Activated naive CD4-positive, alpha-beta T cell treated with anti-CD3 and anti-CD28 coated beads for 36 hours (primary cell): ENCODE measurements at regions of chr11 and their contacts with region 1.

Region 1: DNA sequence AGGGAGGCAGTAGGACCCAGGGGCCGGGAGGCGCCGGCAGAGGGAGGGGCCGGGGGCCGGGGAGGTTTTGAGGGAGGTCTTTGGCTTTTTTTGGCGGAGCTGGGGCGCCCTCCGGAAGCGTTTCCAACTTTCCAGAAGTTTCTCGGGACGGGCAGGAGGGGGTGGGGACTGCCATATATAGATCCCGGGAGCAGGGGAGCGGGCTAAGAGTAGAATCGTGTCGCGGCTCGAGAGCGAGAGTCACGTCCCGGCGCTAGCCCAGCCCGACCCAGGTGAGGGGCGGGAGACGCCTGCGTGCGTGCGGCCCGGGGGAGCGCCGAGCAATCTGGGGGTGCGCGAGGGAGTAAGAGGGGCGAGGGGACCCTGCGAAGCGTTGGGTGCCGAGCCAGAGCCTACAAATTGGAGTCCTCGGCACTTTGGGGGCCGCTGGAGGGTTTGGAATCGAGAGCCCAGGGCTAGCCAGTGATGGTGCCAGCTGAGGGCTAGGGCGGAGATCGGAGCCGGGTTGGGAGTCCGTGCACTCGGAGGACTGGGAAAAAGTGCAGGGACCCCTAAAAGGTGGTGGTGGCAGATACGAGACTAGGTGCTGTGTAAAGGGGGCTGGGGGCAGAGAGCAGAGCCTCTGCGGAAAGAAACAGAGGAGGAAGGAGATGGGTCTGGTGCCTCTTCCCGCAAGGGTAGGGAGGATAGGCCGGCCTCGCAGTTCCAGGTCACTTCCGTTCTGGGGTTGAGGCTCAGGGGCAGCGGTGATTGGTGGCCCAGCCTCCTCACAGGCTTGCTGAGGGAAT is at the start of gene SERPINH1:
- DNase-seq: peak; percentile 90
- H3K4me3 Mint-ChIP-seq: peak within 1 kb of the TSS; percentile 94
- H3K27ac Mint-ChIP-seq: peak within 1 kb of the TSS; percentile 97
- H3K4me1 Mint-ChIP-seq: peaks cover 27% of the 10 kb centered on the region
- H3K27me3 Mint-ChIP-seq: no peaks in the 10 kb centered on the region
- total RNA-seq, gene SERPINH1: 13.9 to 15.4 TPM

Region 2: DNA sequence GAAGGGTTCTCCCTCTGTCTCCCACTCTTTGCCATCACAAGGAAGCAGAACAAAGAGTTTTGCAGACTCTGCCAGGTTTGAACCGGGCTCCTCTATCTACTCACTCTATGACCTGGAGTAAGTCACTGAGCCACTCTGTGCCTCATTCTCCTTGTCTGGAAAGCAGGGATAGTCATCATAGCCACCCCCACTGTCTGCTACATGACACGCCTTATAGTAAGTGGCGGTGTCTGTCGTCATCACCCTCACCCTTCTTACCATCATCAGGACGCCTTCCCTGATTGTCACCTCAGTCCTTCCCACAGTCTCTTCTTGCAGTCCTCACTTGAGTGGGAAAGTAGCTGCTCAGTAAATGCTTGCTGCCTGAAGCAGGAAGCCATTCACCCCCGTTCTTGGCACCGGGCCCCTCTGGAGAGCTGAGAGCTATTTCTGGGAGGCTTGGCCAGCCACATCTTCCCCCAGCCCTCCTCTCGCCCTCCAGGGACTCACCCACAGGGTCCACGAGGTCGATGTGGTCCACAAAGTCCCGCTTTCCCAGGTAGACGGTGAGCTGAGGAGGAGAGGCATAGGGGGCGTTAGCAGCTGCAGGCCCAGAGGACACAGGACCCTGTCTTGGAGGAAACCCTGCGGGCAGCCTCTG is 275.3 kb before region 1 on chr11:
- CTCF ChIA-PET with region 1: no interaction called
- intact Hi-C with region 1: no loop called
- DNase-seq: no peak
- H3K4me3 Mint-ChIP-seq: no peak overlapping the region
- H3K27ac Mint-ChIP-seq: no peak overlapping the region
- H3K4me1 Mint-ChIP-seq: peaks cover 7% of the 10 kb centered on the region
- H3K27me3 Mint-ChIP-seq: no peaks in the 10 kb centered on the region

Region 3: GRCh38 chr11:75577207-75577606 is 15.0 kb after region 1 on chr11:
- CTCF ChIA-PET with region 1: interaction called, 10 read pairs
- intact Hi-C with region 1: loop called (anchors 1 kb)
- DNase-seq: peak; percentile 72
- H3K4me3 Mint-ChIP-seq: no peak overlapping the region
- H3K27ac Mint-ChIP-seq: no peak overlapping the region
- H3K4me1 Mint-ChIP-seq: peaks cover 9% of the 10 kb centered on the region
- H3K27me3 Mint-ChIP-seq: peaks cover 2% of the 10 kb centered on the region

Region 4: DNA sequence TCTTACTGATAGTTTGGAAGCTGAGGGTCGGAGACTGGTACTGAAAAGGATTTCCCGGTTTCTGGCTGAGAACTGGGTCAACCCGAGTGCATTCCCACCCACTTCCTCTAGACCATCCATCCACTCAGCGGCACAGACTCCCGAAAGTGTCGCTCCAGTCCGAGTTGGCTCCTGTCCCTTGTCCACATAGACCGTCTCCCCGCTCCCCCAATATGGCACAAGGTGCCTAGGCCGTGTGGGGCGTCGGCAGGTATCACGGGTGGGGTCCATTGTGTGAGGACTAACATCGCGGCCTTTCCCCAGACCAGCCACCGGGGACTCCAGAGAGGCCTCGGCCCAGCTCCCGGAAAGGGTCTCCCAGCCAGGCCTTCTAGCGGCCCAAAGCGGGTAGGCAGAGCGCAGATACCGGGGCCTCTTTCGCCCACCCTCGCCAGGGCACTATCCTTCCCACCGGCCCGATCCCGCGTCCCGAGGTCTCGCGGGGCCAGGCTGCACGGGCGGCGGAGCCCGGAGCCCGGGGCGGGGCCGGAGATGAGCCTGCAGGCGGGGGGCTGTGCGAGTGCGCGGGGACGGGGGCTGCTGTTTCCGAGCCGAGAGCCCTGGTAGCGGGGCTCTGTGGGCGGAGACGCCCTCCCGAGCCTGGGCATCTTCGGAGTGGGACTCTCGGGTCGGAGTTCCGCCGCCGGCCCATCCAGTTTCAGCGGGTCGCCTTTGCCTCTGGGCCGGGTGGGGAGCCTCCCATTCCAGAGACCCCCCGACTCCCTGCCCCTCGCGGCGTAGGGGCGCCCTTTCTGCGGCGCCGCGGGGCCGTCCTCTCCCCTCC is 20.9 kb after region 1 on chr11:
- CTCF ChIA-PET with region 1: interaction called, 10 read pairs
- intact Hi-C with region 1: loop called (anchors 1 kb)
- DNase-seq: peak; percentile 68
- H3K4me3 Mint-ChIP-seq: peak overlapping the region; percentile 72
- H3K27ac Mint-ChIP-seq: peak overlapping the region; percentile 64
- H3K4me1 Mint-ChIP-seq: peaks cover 13% of the 10 kb centered on the region
- H3K27me3 Mint-ChIP-seq: no peaks in the 10 kb centered on the region